ENCODE measurements at regions of chr22 and their contacts with region 1.

Region 1: GRCh38 chr22:36528795-36529751 is at the start of gene EIF3D:
- ATAC-seq: peak; percentile 81 to 95 (median 93)
- H3K4me3 ChIP-seq: peak within 1 kb of the TSS; percentile 55 to 76 (median 59)
- H3K27ac ChIP-seq: peak within 1 kb of the TSS; percentile 69 to 88
- H3K4me1 ChIP-seq: peaks cover 14 to 17% of the 10 kb centered on the region in 2 donors
- total RNA-seq, gene EIF3D: 166 to 232 (median 195) TPM

Region 2: GRCh38 chr22:36702842-36703215 is 173.8 kb after region 1 on chr22:
- in situ Hi-C with region 1: no loop called
- ATAC-seq: peak in 5 of 8 experiments; percentile 20 to 50 (median 36)
- H3K4me3 ChIP-seq: peak overlapping the region; percentile 29 to 49 (median 39)
- H3K27ac ChIP-seq: no peak overlapping the region
- H3K4me1 ChIP-seq: no peaks in the 10 kb centered on the region

Region 3: DNA sequence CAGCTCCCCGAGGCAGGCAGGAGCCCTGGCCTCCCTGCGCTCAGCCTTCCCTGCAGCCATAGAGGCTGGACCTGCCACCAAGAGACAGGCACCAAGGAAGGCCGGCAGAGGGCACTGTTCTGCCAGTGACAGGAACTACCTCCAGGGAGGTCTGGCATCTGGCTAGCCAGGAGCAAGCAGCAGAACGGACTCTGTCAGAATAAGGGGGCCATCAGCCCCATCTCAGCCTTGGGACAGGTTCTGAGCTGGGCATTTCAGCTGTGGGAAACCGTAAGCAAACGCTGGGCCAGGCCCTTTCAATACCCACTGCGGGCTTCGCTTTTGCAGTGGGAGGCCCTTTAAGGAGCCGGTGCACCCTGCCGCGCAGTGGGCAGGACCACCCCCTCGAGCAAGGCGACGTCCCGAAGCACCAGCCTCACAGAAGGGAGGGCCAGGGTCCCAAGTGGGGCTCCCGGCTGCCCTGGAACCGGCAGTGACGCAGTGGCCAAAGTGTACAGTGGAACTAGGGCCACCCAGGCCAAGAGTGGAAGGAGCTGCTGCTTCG is 228.7 kb after region 1 on chr22:
- in situ Hi-C with region 1: loop called in 2 of 9 experiments (anchors 25 kb)
- ATAC-seq: peak; percentile 86 to 98 (median 92)
- H3K4me3 ChIP-seq: no peak overlapping the region
- H3K27ac ChIP-seq: no peak overlapping the region
- H3K4me1 ChIP-seq: no peaks in the 10 kb centered on the region

Region 4: DNA sequence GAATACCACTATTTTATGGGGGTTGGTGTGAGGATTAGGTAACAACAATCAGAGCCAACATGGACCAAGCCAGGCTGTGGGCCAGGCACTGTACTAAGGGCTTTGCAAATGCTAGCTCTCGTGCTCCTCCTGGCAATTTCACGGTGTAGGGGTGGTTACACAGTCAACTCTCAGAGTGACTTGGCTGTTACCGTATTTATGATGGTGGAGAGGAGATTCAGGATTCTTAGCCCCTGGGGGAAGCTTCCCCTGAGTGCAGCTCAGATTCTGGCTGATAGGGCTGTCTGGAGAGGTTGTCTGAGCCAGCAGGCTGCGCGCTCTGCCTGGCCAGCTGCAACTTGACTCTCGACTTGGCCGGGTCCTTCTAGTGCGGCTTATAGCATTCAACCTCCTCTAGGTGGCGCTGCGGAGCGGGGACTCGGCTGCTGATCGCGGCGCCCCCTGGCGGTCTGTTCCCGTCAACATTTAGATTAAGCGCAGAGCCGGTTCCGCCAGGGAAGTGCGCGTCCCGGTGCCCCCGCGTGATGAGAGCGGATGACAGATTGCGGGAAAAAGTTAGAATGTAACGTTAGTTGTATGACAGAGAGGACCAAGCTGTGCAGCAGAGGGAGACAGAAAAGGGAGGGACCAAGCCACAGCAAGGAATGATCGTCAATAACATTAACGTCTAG is 327.2 kb after region 1 on chr22:
- in situ Hi-C with region 1: loop called in 1 of 9 experiments (anchors 25 kb)
- ATAC-seq: peak; percentile 91 to 98 (median 96)
- H3K4me3 ChIP-seq: no peak overlapping the region
- H3K27ac ChIP-seq: no peak overlapping the region
- H3K4me1 ChIP-seq: peaks cover 0 to 12% of the 10 kb centered on the region in 2 donors

Region 5: DNA sequence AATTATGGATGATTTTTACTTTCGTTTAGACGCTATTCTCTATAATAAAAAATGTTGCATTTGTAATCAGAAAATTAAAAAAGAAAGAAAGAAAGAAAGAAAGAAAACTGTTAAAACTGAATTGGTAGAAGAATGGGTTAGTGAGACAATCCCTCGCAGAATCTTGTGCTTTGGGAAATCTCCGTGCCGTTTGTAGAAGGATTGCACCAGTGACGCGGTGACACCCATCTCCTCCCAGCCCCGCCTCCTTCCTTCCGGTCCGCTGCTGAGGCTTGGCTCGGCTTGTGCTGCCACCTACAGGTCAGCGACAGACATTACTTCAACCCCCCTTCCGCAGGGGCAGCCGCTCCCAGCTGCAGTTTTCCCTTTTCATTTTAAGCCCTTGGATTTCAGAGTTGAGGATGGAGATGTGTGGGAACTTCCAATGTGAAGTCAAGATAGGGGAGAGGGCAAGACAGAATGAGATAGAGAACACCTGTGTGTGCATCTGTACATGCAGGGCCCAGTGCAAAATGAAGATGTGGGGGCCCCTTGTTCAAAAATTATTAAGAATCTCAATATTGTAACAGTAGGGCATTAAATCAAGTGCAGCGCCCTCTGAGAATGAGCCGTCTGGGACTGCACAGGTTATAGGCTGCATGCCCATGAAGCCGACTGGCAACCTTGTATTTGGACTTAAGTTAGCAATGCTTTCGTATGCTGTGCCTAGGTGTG is 449.0 kb after region 1 on chr22:
- in situ Hi-C with region 1: loop called in 1 of 9 experiments (anchors 25 kb)
- ATAC-seq: peak; percentile 81 to 94 (median 86)
- H3K4me3 ChIP-seq: peak overlapping the region; percentile 4 to 14 (median 4)
- H3K27ac ChIP-seq: no peak overlapping the region
- H3K4me1 ChIP-seq: peaks cover 0 to 4% of the 10 kb centered on the region in 2 donors